ENCODE measurements at regions of chr5 and their contacts with region 1.

Region 1: GRCh38 chr5:160119142-160119904 is at the start of gene PWWP2A:
- DNase-seq: peak; percentile 100
- ATAC-seq: peak; percentile 92
- H3K4me3 ChIP-seq: peak within 1 kb of the TSS; percentile 70 to 88
- H3K27ac ChIP-seq: peak within 1 kb of the TSS; percentile 79
- H3K4me1 ChIP-seq: peaks cover 4 to 7% of the 10 kb centered on the region in 2 experiments; a peak in 2 of 4 replicates
- H3K27me3 ChIP-seq: no peaks in the 10 kb centered on the region
- CTCF ChIP-seq: no peak
- POLR2A ChIP-seq: peak; percentile 81
- RAD21 ChIP-seq: no peak
- total RNA-seq, gene PWWP2A: 14.7 TPM

Region 2: DNA sequence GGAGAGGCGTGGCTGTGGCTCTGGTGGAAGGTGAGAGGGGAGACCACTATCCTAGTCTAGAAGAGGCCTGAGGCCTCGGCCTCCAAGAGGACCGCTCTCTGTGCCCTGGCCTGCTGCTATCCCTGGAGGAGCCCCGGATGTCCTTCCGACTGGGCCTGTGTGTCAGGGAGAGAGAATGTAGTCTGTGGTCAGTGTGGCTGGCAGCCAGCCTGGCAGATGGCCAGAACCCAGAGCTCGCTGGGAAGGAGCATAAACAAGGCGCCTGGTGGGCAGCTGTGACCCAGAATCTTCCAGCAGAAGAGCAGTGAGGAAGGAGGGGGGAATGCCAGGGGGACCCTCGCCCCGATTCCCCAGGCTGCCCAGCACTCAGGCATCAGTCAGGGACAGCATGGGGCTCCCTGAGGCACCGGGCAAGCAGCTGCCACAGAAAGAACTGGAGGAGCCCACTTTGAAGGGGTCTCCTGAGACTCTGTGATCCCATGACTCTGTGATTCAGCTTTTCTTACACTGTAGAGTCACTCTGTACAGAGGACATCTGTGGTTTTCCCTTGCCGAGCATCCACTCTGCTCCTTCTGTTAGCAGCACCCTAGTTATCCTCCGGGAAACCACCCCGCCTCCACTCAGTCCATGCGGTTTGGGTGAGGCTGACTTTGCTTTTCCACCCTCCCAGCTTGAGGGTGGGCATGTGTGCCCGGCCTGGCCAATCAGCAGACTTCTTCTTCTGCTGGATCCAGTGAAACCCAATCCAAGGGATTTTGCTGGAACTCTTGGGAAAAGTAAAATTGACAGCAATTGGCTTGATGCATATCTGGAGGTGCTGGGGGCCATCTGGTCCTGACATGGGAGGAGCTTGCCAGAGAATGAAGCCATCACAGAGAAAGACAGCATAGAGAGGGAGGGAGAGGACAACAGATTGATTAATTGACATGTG is 46.1 kb after region 1 on chr5:
- CTCF ChIA-PET with region 1: no interaction called
- POLR2A ChIA-PET with region 1: no interaction called
- RAD21 ChIA-PET with region 1: no interaction called
- intact Hi-C with region 1: loop called (anchors 1 kb)
- DNase-seq: peak; percentile 95
- ATAC-seq: peak; percentile 92
- H3K4me3 ChIP-seq: peak overlapping the region; percentile 38 to 52
- H3K27ac ChIP-seq: peak overlapping the region; percentile 78
- H3K4me1 ChIP-seq: peaks cover 18 to 33% of the 10 kb centered on the region in 2 experiments
- H3K27me3 ChIP-seq: no peaks in the 10 kb centered on the region
- CTCF ChIP-seq: no peak
- POLR2A ChIP-seq: peak; percentile 37
- RAD21 ChIP-seq: no peak

Region 3: GRCh38 chr5:160175438-160176218 is 56.3 kb after region 1 on chr5:
- CTCF ChIA-PET with region 1: no interaction called
- POLR2A ChIA-PET with region 1: no interaction called
- RAD21 ChIA-PET with region 1: no interaction called
- intact Hi-C with region 1: no loop called
- DNase-seq: no peak
- ATAC-seq: no peak
- H3K4me3 ChIP-seq: no peak overlapping the region
- H3K27ac ChIP-seq: no peak overlapping the region
- H3K4me1 ChIP-seq: no peaks in the 10 kb centered on the region
- H3K27me3 ChIP-seq: no peaks in the 10 kb centered on the region
- CTCF ChIP-seq: no peak
- POLR2A ChIP-seq: no peak
- RAD21 ChIP-seq: no peak

Region 4: DNA sequence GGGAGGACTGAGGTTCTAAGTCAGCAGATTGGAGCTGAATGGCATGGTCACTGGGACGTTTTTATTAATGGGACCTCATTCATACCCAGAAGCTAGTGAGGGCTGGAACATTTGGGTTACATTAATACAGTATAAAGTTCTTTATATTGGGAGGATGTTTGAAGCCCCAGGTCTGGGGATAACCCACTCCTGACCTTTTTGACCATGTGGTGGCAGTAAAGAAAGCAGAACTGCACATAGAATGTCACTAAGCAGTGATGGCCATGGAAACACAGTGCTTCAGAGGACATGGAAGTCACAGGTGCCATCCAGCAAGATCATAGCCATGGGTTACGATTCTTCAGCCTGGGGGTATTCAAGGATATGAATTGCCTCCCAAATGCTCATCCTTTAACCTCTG is 556.7 kb after region 1 on chr5:
- CTCF ChIA-PET with region 1: no interaction called
- POLR2A ChIA-PET with region 1: no interaction called
- RAD21 ChIA-PET with region 1: no interaction called
- intact Hi-C with region 1: no loop called
- DNase-seq: no peak
- ATAC-seq: no peak
- H3K4me3 ChIP-seq: no peak overlapping the region
- H3K27ac ChIP-seq: no peak overlapping the region
- H3K4me1 ChIP-seq: no peaks in the 10 kb centered on the region
- H3K27me3 ChIP-seq: no peaks in the 10 kb centered on the region
- CTCF ChIP-seq: no peak
- POLR2A ChIP-seq: no peak
- RAD21 ChIP-seq: no peak